ENCODE measurements at regions of chr1 and their contacts with region 1.

Region 1: GRCh38 chr1:211578640-211579433 is at the start of gene SLC30A1:
- DNase-seq: peak; percentile 97 to 100 (median 99)
- ATAC-seq: peak; percentile 88 to 93 (median 90)
- H3K4me3 ChIP-seq: peak within 1 kb of the TSS; percentile 91 to 92
- H3K4me3 Mint-ChIP-seq: peak within 1 kb of the TSS; percentile 89 to 94 (median 90)
- H3K27ac ChIP-seq: peak within 1 kb of the TSS; percentile 51
- H3K27ac Mint-ChIP-seq: peak within 1 kb of the TSS; percentile 84 to 87
- H3K4me1 ChIP-seq: peaks cover 14 to 19% of the 10 kb centered on the region in 2 experiments
- H3K4me1 Mint-ChIP-seq: peaks cover 32 to 43% (median 38%) of the 10 kb centered on the region in 3 donors
- H3K27me3 ChIP-seq: no peaks in the 10 kb centered on the region
- H3K27me3 Mint-ChIP-seq: no peaks in the 10 kb centered on the region
- total RNA-seq, gene SLC30A1: 4.7 to 11.8 (median 9.4) TPM

Region 2: GRCh38 chr1:211606914-211607755 is 28.3 kb after region 1 on chr1:
- CTCF ChIA-PET with region 1: interaction called in 1 of 2 experiments, 14 read pairs
- POLR2A ChIA-PET with region 1: no interaction called
- DNase-seq: peak in 18 of 35 experiments; percentile 6 to 48 (median 13)
- ATAC-seq: peak; percentile 65 to 82 (median 77)
- H3K4me3 ChIP-seq: peak overlapping the region; percentile 27 to 47
- H3K4me3 Mint-ChIP-seq: peak overlapping the region; percentile 76 to 81 (median 80)
- H3K27ac ChIP-seq: peak overlapping the region; percentile 15
- H3K27ac Mint-ChIP-seq: peak overlapping the region; percentile 85 to 95
- H3K4me1 ChIP-seq: peaks cover 5 to 10% of the 10 kb centered on the region in 2 experiments
- H3K4me1 Mint-ChIP-seq: peaks cover 20 to 27% (median 27%) of the 10 kb centered on the region in 3 donors
- H3K27me3 ChIP-seq: no peaks in the 10 kb centered on the region
- H3K27me3 Mint-ChIP-seq: no peaks in the 10 kb centered on the region

Measured in T-cell (primary cell).